Activated CD4-positive, alpha-beta T cell treated with anti-CD3 and anti-CD28 coated beads for 36 hours (primary cell): ENCODE measurements at regions of chr6 and their contacts with region 1.

Region 1: DNA sequence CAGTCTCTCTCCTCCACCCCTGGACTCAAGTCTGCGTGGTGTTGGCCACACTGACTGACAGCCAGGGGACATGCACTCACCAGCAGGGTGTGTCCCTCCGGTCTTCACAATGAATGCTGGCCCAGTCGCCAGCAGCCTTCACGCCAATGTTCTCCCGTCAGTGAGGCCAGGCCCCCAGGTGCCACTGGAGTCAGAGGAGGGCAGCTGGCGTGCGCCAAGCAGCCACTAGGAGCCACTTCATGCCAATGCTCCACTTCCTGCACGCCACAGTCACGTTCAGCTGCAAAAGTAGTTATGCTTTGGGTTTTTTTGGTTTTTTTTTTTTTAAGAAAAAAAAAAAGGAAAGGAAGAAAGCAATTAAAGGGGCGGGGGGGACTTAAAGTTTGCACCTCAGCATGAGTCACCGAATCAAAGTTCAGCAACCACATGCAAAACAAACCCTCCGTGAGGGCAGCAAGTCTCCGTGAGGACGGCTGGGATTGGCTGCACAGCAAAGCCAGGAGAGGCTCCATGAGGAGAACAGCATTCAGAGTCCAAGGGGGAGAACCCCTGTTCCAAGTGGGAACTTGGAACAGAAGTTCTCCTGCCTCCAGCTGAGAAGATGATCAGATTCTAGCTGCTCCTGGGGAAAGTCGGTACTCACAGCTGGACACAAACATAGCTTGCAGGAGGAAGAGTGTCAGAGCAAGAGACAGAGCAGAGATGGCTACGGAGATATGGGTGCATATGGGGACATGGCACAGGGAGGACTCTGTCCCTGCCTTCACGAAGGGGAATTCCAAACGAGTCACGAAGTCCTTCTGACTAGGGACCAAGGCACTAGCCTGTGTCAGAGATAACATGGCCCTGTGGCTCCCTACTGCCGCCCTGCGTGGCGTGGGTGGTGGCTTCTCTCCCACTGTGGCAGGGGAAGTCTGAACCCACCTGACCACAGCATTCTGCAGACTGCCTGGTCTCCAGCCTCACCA is at the start of gene ZC3H12D:
- DNase-seq: peak; percentile 92
- ATAC-seq: peak; percentile 78
- H3K4me3 Mint-ChIP-seq: peak within 1 kb of the TSS; percentile 92
- H3K27ac Mint-ChIP-seq: peak within 1 kb of the TSS; percentile 99
- H3K4me1 Mint-ChIP-seq: peaks cover 65% of the 10 kb centered on the region
- H3K27me3 Mint-ChIP-seq: no peaks in the 10 kb centered on the region
- total RNA-seq, gene ZC3H12D: 72.2 to 89.9 TPM

Region 2: GRCh38 chr6:149389509-149390297 is 95.3 kb before region 1 on chr6:
- CTCF ChIA-PET with region 1: no interaction called
- POLR2A ChIA-PET with region 1: interaction called, 11 read pairs
- intact Hi-C with region 1: no loop called
- DNase-seq: no peak
- ATAC-seq: peak; percentile 59
- H3K4me3 Mint-ChIP-seq: no peak overlapping the region
- H3K27ac Mint-ChIP-seq: no peak overlapping the region
- H3K4me1 Mint-ChIP-seq: peaks cover 68% of the 10 kb centered on the region
- H3K27me3 Mint-ChIP-seq: no peaks in the 10 kb centered on the region

Region 3: DNA sequence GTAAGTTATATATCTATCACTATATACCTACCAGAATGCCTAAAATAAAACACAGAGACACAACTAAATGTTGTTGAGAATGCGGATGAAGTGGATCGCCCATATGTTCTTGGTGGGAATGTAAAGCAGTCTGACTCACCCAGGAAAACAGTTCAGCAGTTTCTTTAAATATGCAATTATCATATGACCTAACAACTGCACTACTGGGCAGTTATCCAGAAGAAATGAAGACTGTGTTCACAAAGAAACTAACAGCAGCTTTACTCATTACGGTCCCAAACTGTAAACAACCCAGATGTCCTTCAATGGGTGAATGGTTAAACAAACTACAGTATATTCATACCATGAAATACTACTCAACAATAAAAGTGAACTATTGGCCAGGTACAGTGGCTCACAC is 14.0 kb after region 1 on chr6:
- CTCF ChIA-PET with region 1: interaction called, 11 read pairs
- POLR2A ChIA-PET with region 1: interaction called, 11 read pairs
- intact Hi-C with region 1: loop called (anchors 1 kb)
- DNase-seq: no peak
- ATAC-seq: no peak
- H3K4me3 Mint-ChIP-seq: no peak overlapping the region
- H3K27ac Mint-ChIP-seq: peak overlapping the region; percentile 76
- H3K4me1 Mint-ChIP-seq: peaks cover 85% of the 10 kb centered on the region
- H3K27me3 Mint-ChIP-seq: no peaks in the 10 kb centered on the region

Region 4: DNA sequence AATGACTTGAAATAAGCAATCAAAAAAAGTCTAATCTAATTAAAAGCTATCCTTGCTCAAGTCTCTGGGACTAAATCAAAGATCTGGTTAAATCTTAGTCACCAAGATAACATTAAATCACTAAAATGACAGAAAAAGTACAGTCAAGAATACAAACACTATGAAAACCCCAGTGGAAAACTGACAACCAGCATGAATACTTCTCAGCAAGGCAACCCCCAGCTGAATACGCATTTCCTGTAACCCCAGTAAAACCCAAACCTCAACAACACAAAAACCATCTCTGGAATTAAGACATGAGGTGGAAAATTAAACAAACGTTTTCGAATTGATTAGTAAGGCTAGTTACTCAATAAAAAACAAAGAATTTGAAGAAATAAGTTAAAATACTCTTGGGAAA is 23.5 kb after region 1 on chr6:
- CTCF ChIA-PET with region 1: interaction called, 40 read pairs
- POLR2A ChIA-PET with region 1: interaction called, 7 read pairs
- intact Hi-C with region 1: loop called (anchors 1 to 2 kb)
- DNase-seq: peak; percentile 60
- ATAC-seq: peak; percentile 90
- H3K4me3 Mint-ChIP-seq: peak overlapping the region; percentile 48
- H3K27ac Mint-ChIP-seq: peak overlapping the region; percentile 99
- H3K4me1 Mint-ChIP-seq: peaks cover 62% of the 10 kb centered on the region
- H3K27me3 Mint-ChIP-seq: no peaks in the 10 kb centered on the region

Region 5: GRCh38 chr6:149545754-149546528 is 60.9 kb after region 1 on chr6 and contains the start of gene PPIL4:
- CTCF ChIA-PET with region 1: interaction called, 6 read pairs
- POLR2A ChIA-PET with region 1: no interaction called
- intact Hi-C with region 1: loop called in 1 of 2 experiments (anchors 1 kb)
- DNase-seq: peak; percentile 98
- ATAC-seq: peak; percentile 85
- H3K4me3 Mint-ChIP-seq: peak within 1 kb of the TSS; percentile 97
- H3K27ac Mint-ChIP-seq: peak within 1 kb of the TSS; percentile 98
- H3K4me1 Mint-ChIP-seq: peaks cover 42% of the 10 kb centered on the region
- H3K27me3 Mint-ChIP-seq: no peaks in the 10 kb centered on the region
- total RNA-seq, gene PPIL4: 22.6 to 26.8 TPM

Region 6: GRCh38 chr6:149852180-149852579 is 367.2 kb after region 1 on chr6:
- CTCF ChIA-PET with region 1: no interaction called
- POLR2A ChIA-PET with region 1: no interaction called
- intact Hi-C with region 1: no loop called
- DNase-seq: no peak
- ATAC-seq: no peak
- H3K4me3 Mint-ChIP-seq: no peak overlapping the region
- H3K27ac Mint-ChIP-seq: no peak overlapping the region
- H3K4me1 Mint-ChIP-seq: peaks cover 17% of the 10 kb centered on the region
- H3K27me3 Mint-ChIP-seq: peaks cover 5% of the 10 kb centered on the region